HepG2 (cell line): ENCODE measurements at regions of chr2 and their contacts with region 1.

Region 1: GRCh38 chr2:182666674-182667314 is 49.3 kb upstream of the DNAJC10 start:
- DNase-seq: peak; percentile 31
- ATAC-seq: peak; percentile 79
- H3K4me3 ChIP-seq: no peak overlapping the region
- H3K27ac ChIP-seq: no peak overlapping the region
- H3K4me1 ChIP-seq: peaks cover 16% of the 10 kb centered on the region
- H3K27me3 ChIP-seq: no peaks in the 10 kb centered on the region; a peak in 1 of 5 replicates
- CTCF ChIP-seq: peak; percentile 45
- EP300 ChIP-seq: no peak
- POLR2A ChIP-seq: no peak
- RAD21 ChIP-seq: no peak

Region 2: GRCh38 chr2:182715896-182716668 is 49.3 kb after region 1 on chr2 and contains the start of gene DNAJC10:
- CTCF ChIA-PET with region 1: no interaction called
- POLR2A ChIA-PET with region 1: interaction called, 4 read pairs
- in situ Hi-C with region 1: no loop called
- intact Hi-C with region 1: loop called (anchors 1 kb)
- DNase-seq: peak; percentile 87
- ATAC-seq: peak; percentile 97
- H3K4me3 ChIP-seq: peak within 1 kb of the TSS; percentile 88 to 100 (median 98)
- H3K27ac ChIP-seq: peak within 1 kb of the TSS; percentile 81
- H3K4me1 ChIP-seq: peaks cover 27% of the 10 kb centered on the region
- H3K27me3 ChIP-seq: no peaks in the 10 kb centered on the region; a peak in 1 of 5 replicates
- CTCF ChIP-seq: no peak; the same call in 1 of the 2 replicates
- EP300 ChIP-seq: no peak; a peak in 1 of 4 replicates
- POLR2A ChIP-seq: peak; percentile 77 to 98; a peak in 3 of 4 replicates
- RAD21 ChIP-seq: peak; percentile 51; the same call in 1 of the 2 replicates
- total RNA-seq, gene DNAJC10: 178 and 190 TPM in 2 replicates

Region 3: DNA sequence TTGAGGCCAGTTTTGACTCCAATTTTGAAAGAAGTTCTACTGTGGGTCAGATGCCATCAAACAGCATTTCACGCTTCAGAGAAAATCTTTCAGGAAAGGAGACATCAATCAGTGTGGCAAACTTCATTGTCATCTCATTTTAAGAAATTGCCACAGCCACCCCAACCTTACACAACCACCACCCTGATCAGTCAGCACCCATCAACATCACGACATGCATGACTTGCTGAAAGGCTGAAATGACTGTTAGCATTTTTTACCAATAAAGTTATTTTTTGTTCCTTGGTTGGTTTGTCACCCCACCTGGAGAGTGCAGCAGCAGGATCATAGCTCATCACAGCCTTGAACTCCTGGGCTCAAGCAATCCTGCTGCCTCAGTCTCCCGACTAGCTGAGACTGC is 59.7 kb after region 1 on chr2:
- CTCF ChIA-PET with region 1: no interaction called
- POLR2A ChIA-PET with region 1: no interaction called
- in situ Hi-C with region 1: no loop called
- intact Hi-C with region 1: no loop called
- DNase-seq: no peak
- ATAC-seq: no peak
- H3K4me3 ChIP-seq: no peak overlapping the region
- H3K27ac ChIP-seq: no peak overlapping the region
- H3K4me1 ChIP-seq: peaks cover 8% of the 10 kb centered on the region; the same call in 1 of the 2 replicates
- H3K27me3 ChIP-seq: no peaks in the 10 kb centered on the region
- CTCF ChIP-seq: no peak
- EP300 ChIP-seq: no peak
- POLR2A ChIP-seq: no peak
- RAD21 ChIP-seq: no peak